Left colon (tissue), 2 donors: ENCODE measurements at regions of chr17 and their contacts with region 1.

Region 1: GRCh38 chr17:76714822-76715495 is 4.2 kb upstream of the MXRA7 start:
- DNase-seq: peak in 1 of 2 donors; percentile 83
- ATAC-seq: no peak

Region 2: DNA sequence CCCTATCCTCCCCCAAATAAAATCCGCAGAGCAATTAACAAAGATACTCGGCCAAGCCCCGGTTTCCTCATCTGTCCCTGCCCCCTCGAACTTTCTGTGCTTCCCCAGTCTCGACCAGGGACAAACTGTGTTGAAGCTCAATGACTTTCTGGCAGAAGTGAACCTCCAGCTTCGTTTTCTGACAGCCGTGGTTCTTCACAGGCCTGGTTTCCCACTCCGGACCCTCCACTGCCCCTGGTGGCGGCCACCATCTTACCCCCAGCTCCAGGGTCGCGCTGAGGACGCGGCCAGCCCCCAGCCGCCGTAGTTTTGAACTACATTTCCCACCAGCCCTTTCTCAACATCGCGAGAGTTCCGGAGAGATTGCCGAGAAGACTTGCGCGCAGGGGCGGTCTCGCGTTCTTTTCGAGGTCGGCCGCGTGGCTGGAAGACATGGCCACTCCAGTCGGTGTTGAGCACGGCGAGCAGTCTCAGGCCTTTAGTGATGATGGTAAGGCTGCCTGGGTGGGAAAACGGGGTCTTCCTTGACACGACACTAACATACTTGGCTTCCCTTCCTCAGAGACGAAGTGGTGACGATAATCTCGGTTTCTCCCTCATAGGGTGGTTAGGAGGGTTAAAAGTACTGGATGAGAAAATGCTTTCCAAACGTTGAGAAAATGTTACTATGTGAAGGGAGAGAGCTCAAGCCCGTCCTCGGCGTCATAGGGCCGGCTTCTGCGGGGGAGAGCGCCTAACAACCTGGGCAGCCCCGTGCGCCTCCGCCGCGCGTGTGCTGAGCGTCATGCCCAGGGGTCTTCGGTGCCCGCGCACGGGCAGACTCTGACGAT is 157.4 kb before region 1 on chr17:
- intact Hi-C with region 1: loop called in 1 of 2 experiments (anchors 5 kb)
- DNase-seq: peak; percentile 95 to 96
- ATAC-seq: peak; percentile 95

Region 3: DNA sequence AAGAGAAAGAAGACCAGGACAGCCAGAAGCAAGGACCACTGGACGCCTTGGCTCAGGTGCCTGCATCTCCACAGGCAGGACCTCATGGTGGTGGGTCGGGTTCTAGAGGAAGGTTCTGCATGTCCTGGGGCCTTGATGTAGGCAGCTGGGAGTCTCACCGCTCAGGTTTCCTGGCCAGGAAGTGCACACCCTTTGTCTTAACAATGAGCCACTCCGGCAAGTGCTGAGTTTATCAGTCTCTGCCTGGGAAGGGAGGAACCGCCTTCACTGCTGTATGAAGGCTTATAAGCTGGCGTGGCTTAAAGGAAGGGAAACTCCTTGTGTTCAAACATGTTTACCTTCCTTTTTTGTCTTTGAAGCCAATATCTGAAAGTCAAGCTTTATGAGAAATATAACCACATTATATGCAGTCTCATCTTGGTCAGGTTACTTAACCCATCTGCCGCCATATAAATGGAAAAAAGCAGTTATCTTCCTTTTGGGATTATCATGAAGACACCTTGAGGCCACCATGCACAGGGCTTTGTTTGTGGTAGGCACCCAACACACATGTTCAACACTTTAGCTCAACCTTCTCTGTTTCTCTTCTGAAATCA is 71.3 kb before region 1 on chr17 and contains the start of gene ST6GALNAC1:
- intact Hi-C with region 1: no loop called
- DNase-seq: peak; percentile 80 to 85
- ATAC-seq: peak; percentile 74
- total RNA-seq, gene ST6GALNAC1: 322 to 434 TPM

Region 4: DNA sequence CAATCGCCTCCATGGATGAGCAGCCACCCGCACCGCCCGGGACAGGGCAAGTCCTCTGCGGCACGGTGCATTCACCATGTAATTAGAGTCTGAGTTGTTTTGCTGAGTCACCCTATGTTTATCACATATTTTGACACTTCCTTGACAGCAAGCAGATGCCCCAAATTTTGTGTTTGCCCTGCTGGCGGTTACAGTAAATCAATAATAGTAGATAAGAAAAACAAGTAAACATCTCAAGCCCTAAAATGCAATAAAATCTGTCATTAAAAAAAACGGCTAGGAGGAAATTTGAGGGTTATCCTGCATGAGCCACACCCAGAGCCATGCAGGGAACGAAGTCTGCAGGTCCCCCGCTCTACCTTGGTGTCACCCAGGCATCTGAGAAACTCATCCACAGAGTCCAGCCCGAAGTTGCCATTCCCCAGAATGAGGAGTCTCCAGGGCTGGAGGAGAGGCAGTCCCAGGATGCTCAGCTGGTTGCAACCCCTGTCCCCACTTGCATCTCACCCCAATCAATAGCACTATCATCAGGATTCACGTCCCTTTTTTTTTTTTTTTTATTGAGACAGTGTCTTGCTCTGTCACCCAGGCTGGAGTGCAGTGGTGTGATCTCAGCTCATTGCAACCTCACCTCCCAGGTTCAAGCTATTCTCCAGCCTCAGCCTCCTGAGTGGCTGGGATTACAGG is 54.9 kb before region 1 on chr17:
- intact Hi-C with region 1: no loop called
- DNase-seq: peak; percentile 69 to 80
- ATAC-seq: peak; percentile 84